Endothelial cell of umbilical vein (primary cell): ENCODE measurements at regions of chr16 and their contacts with region 1.

Region 1: GRCh38 chr16:88452482-88453216 is 431 bp upstream of the ZFPM1 start:
- DNase-seq: peak; percentile 99
- H3K4me3 ChIP-seq: peak overlapping the region; percentile 48 to 70 (median 59)
- H3K27ac ChIP-seq: peak overlapping the region; percentile 73
- H3K4me1 ChIP-seq: peaks cover 24% of the 10 kb centered on the region
- H3K27me3 ChIP-seq: no peaks in the 10 kb centered on the region
- CTCF ChIP-seq: no peak
- POLR2A ChIP-seq: no peak

Region 2: DNA sequence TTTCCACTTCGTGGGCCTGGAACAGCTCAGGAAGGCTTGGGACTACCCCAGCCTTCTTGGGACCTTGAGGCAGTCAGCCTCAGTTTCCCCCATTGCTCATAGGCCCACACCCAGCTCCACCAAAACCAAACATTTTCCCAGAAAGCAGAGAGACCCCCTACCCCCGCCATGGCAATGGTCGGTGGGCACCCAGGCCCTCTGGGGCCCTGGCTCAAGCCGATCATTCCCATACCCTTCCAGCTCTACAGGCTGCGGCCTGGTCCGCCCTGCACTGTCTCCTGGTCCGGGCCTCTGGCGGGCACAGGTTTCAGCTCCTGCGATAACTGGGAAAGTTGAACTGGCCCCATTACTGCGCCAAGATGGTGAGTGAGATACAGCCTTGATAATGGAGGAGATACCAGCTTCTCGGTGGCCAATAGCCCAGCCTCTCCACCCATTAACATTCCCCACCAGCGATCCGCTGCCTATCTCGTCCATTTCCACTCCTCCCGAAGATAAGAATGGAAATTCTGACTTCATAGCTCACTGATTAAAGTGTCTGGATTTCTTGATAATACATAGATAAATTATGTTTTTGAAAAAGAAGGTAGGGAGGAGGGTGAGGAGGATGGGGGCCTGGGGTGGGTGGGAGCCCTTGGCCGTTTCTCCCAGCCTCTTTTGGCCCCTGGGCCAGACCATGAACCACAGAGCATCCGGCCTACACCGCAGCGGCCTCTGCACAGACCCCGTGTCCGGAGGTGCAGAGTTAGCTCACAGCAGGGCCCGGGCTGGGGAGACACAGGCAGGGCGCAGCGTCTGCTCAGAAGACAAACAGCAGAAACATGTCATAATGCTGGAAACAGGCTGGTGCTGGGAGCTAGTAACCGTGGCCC is 12.0 kb after region 1 on chr16:
- CTCF ChIA-PET with region 1: interaction called, 7 read pairs
- POLR2A ChIA-PET with region 1: no interaction called
- dilution Hi-C with region 1: no loop called
- intact Hi-C with region 1: loop called (anchors 1 kb)
- DNase-seq: peak; percentile 39
- H3K4me3 ChIP-seq: no peak overlapping the region
- H3K27ac ChIP-seq: peak overlapping the region; percentile 46
- H3K4me1 ChIP-seq: peaks cover 26% of the 10 kb centered on the region
- H3K27me3 ChIP-seq: no peaks in the 10 kb centered on the region
- CTCF ChIP-seq: no peak
- POLR2A ChIP-seq: no peak

Region 3: GRCh38 chr16:88473666-88474534 is 21.3 kb after region 1 on chr16:
- CTCF ChIA-PET with region 1: interaction called, 3 read pairs
- POLR2A ChIA-PET with region 1: no interaction called
- dilution Hi-C with region 1: no loop called
- intact Hi-C with region 1: loop called (anchors 2 kb)
- DNase-seq: peak; percentile 55
- H3K4me3 ChIP-seq: no peak overlapping the region
- H3K27ac ChIP-seq: peak overlapping the region; percentile 63
- H3K4me1 ChIP-seq: peaks cover 6% of the 10 kb centered on the region
- H3K27me3 ChIP-seq: no peaks in the 10 kb centered on the region
- CTCF ChIP-seq: no peak
- POLR2A ChIP-seq: no peak

Region 4: GRCh38 chr16:88504489-88505404 is 52.1 kb after region 1 on chr16:
- CTCF ChIA-PET with region 1: interaction called, 3 read pairs
- POLR2A ChIA-PET with region 1: interaction called, 4 read pairs
- dilution Hi-C with region 1: no loop called
- intact Hi-C with region 1: loop called (anchors 5 kb)
- DNase-seq: no peak
- H3K4me3 ChIP-seq: no peak overlapping the region
- H3K27ac ChIP-seq: no peak overlapping the region
- H3K4me1 ChIP-seq: peaks cover 10% of the 10 kb centered on the region
- H3K27me3 ChIP-seq: no peaks in the 10 kb centered on the region
- CTCF ChIP-seq: no peak
- POLR2A ChIP-seq: no peak

Region 5: DNA sequence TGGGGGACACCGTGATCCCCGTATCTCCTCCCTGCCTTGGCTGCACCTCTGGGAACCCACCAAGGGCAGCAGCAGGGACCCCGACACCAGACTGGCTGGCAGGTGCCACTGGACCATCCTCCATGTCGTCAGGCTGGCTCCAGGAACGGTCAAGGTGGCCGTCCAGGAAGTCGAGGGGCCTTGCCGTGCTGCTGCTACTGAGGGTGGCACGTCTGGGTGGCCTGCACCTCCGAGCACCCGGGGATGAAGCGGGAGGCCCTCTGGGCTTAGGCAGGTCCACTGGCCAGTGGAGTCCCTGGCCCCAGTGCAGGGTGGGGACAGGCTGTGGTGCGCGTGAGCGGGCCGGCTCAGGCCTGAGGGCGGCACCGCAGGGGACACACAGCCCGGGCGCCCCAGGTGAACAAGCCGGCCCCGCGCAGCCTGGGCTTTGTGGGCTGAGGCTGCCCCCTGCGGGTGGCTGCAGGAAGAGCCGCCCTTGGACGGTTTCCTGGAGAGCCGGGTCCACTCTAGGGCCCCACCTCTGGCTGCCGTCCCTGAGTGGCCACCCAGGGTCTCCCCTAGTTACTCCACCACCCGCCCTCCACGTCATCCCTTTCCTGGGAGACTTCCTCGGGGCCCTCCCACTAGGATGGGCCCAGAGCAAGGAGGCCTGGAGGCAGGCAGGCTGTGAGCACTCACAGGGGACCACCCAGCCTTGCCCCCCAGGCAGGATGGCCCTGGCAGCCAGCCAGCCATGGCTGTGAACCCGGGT is 74.7 kb after region 1 on chr16:
- CTCF ChIA-PET with region 1: interaction called, 5 read pairs
- POLR2A ChIA-PET with region 1: no interaction called
- dilution Hi-C with region 1: no loop called
- intact Hi-C with region 1: loop called (anchors 2 kb)
- DNase-seq: peak; percentile 45
- H3K4me3 ChIP-seq: no peak overlapping the region
- H3K27ac ChIP-seq: no peak overlapping the region
- H3K4me1 ChIP-seq: peaks cover 20% of the 10 kb centered on the region
- H3K27me3 ChIP-seq: no peaks in the 10 kb centered on the region
- CTCF ChIP-seq: peak; percentile 88 to 98
- POLR2A ChIP-seq: no peak

Region 6: GRCh38 chr16:88569985-88570690 is 117.5 kb after region 1 on chr16 and contains the start of gene ZC3H18:
- CTCF ChIA-PET with region 1: interaction called, 3 read pairs
- POLR2A ChIA-PET with region 1: no interaction called
- dilution Hi-C with region 1: no loop called
- intact Hi-C with region 1: loop called (anchors 5 kb)
- DNase-seq: peak; percentile 97
- H3K4me3 ChIP-seq: peak within 1 kb of the TSS; percentile 71 to 89 (median 73)
- H3K27ac ChIP-seq: peak within 1 kb of the TSS; percentile 44
- H3K4me1 ChIP-seq: peaks cover 14% of the 10 kb centered on the region
- H3K27me3 ChIP-seq: no peaks in the 10 kb centered on the region
- CTCF ChIP-seq: no peak
- POLR2A ChIP-seq: peak; percentile 86
- total RNA-seq, gene ZC3H18: 52.8 and 59.6 TPM in 2 replicates